Activated naive CD4-positive, alpha-beta T cell treated with anti-CD3 and anti-CD28 coated beads for 36 hours (primary cell): ENCODE measurements at regions of chr18 and their contacts with region 1.

Region 1: GRCh38 chr18:35580701-35581539 is 620 bp upstream of the GALNT1 start:
- DNase-seq: peak; percentile 51
- H3K4me3 Mint-ChIP-seq: peak overlapping the region; percentile 74
- H3K27ac Mint-ChIP-seq: peak overlapping the region; percentile 71
- H3K4me1 Mint-ChIP-seq: peaks cover 45% of the 10 kb centered on the region
- H3K27me3 Mint-ChIP-seq: peaks cover 15% of the 10 kb centered on the region

Region 2: GRCh38 chr18:35290073-35290735 is 290.7 kb before region 1 on chr18 and contains the start of gene ZSCAN30:
- CTCF ChIA-PET with region 1: no interaction called
- intact Hi-C with region 1: loop called (anchors 2 kb)
- DNase-seq: peak; percentile 96
- H3K4me3 Mint-ChIP-seq: peak within 1 kb of the TSS; percentile 96
- H3K27ac Mint-ChIP-seq: peak within 1 kb of the TSS; percentile 97
- H3K4me1 Mint-ChIP-seq: peaks cover 48% of the 10 kb centered on the region
- H3K27me3 Mint-ChIP-seq: peaks cover 2% of the 10 kb centered on the region
- total RNA-seq, gene ZSCAN30: 12.0 to 14.3 TPM

Region 3: DNA sequence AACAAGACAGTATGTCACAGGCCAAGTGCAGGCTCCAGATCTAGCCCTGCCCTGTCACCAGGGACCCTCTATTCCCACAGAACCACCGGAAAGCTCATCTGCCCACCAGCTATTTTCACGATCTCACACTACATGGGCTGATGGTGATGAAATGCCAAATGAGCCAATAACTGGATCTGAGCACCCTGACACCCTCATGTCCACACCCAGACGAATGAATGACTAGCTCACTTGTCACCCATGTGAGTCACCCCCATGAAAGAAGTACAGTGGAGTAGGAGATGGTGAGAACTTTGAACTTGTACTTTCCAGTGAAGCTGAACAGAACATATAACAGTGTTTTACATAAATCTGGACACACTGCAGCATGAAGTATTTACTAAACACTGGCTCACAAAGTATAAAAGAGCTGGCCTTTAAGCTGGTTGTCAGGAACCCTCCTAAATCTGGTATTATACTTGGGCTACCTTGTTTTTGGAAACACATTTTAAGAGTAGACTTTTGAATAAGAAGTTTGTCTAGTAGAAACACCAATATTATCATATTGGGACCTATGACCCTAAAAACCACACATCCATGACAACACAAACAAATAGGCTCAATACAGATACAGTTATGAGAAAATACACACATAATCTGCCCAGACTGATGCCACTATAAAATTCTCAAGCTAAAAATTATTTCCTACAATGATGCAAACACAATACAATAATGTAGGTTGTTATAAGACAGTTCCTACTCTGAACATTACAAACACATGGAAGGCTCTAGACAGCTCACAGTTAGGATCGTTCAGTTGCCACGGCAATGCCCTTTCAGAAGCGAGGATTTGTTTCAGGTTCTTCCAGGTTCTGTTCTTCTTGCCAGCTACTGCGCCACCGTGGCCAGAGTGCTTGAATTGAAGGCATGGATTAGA is 102.1 kb before region 1 on chr18:
- CTCF ChIA-PET with region 1: no interaction called
- intact Hi-C with region 1: loop called (anchors 1 kb)
- DNase-seq: peak; percentile 68
- H3K4me3 Mint-ChIP-seq: peak overlapping the region; percentile 0
- H3K27ac Mint-ChIP-seq: peak overlapping the region; percentile 9
- H3K4me1 Mint-ChIP-seq: peaks cover 43% of the 10 kb centered on the region
- H3K27me3 Mint-ChIP-seq: no peaks in the 10 kb centered on the region

Region 4: GRCh38 chr18:35484034-35484433 is 96.9 kb before region 1 on chr18:
- CTCF ChIA-PET with region 1: no interaction called
- intact Hi-C with region 1: loop called (anchors 1 kb)
- DNase-seq: no peak
- H3K4me3 Mint-ChIP-seq: no peak overlapping the region
- H3K27ac Mint-ChIP-seq: no peak overlapping the region
- H3K4me1 Mint-ChIP-seq: peaks cover 60% of the 10 kb centered on the region
- H3K27me3 Mint-ChIP-seq: no peaks in the 10 kb centered on the region

Region 5: GRCh38 chr18:35513181-35513936 is 67.6 kb before region 1 on chr18:
- CTCF ChIA-PET with region 1: no interaction called
- intact Hi-C with region 1: no loop called
- DNase-seq: no peak
- H3K4me3 Mint-ChIP-seq: no peak overlapping the region
- H3K27ac Mint-ChIP-seq: no peak overlapping the region
- H3K4me1 Mint-ChIP-seq: no peaks in the 10 kb centered on the region
- H3K27me3 Mint-ChIP-seq: no peaks in the 10 kb centered on the region

Region 6: GRCh38 chr18:35547008-35547605 is 33.8 kb before region 1 on chr18:
- CTCF ChIA-PET with region 1: no interaction called
- intact Hi-C with region 1: loop called (anchors 1 kb)
- DNase-seq: no peak
- H3K4me3 Mint-ChIP-seq: no peak overlapping the region
- H3K27ac Mint-ChIP-seq: peak overlapping the region; percentile 9
- H3K4me1 Mint-ChIP-seq: peaks cover 16% of the 10 kb centered on the region
- H3K27me3 Mint-ChIP-seq: no peaks in the 10 kb centered on the region

Region 7: DNA sequence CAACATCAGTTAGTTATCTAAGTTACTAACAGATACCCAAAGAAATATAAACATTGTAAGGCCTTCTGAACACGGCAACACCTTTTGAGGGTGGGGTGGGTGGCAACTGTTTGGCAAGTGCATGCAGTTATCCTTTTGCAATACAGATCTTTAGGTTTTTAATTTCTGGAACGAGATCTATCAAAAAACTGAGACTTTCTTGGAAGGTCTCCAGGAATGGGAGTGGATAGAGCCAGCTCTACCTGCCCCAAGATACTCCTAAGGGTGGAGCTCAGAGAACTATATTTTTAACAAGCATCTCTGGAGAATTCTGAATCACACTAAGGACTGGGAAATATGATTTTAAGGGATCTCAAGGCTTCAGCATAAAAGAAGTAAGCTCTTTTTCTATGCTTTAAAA is 10.7 kb before region 1 on chr18:
- CTCF ChIA-PET with region 1: no interaction called
- intact Hi-C with region 1: no loop called
- DNase-seq: no peak
- H3K4me3 Mint-ChIP-seq: no peak overlapping the region
- H3K27ac Mint-ChIP-seq: no peak overlapping the region
- H3K4me1 Mint-ChIP-seq: peaks cover 7% of the 10 kb centered on the region
- H3K27me3 Mint-ChIP-seq: no peaks in the 10 kb centered on the region

Region 8: DNA sequence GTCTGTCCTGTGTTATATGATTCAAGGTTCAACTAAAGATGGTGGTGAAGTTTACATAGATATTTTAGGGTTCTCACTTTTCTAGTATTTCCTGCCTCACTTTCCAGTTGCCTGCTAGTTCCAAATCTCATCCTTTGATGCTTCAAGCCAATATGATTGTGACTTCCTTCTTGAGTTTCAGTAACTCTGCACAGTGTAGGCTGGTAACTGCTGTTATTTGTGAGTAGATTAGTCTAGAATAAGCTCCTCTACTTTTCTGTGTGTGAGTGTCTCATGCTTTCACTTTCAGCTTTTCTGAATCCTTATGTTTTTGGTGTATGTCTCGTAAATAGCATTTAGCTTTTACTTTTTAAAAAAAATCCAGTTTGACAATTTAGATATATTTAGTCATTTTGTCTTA is 43.2 kb after region 1 on chr18:
- CTCF ChIA-PET with region 1: no interaction called
- intact Hi-C with region 1: loop called (anchors 1 kb)
- DNase-seq: no peak
- H3K4me3 Mint-ChIP-seq: peak overlapping the region; percentile 20
- H3K27ac Mint-ChIP-seq: peak overlapping the region; percentile 48
- H3K4me1 Mint-ChIP-seq: peaks cover 33% of the 10 kb centered on the region
- H3K27me3 Mint-ChIP-seq: no peaks in the 10 kb centered on the region

Region 9: DNA sequence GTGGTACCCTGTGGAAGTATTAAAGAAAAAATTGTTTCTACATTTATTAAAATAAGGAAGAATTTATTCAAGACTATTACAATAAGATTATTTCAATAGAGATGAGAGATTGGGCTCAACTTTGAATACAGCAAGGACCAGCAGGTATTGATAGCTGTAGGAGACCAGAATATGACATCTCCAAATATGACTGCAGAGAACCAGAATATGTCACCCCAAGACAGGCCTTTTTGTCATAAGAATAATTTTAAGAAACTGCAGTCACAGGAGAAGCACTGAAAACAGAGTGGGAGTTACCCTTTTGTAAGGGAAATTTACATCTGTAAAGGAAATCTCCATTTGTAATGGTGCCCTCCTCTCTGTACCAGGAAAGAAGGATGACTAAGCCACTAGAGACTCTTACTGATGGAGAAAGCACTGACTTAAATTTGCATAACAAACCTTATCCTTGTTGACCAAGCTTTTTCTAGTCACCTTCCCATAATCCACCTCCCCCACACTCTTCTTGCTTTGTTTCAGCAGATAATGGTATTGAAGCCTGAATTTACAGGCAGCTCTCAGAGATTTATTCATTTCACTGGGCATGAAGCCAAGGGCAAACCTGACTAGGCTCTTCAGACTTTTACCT is 246.5 kb after region 1 on chr18:
- CTCF ChIA-PET with region 1: no interaction called
- intact Hi-C with region 1: loop called (anchors 5 kb)
- DNase-seq: peak; percentile 62
- H3K4me3 Mint-ChIP-seq: no peak overlapping the region
- H3K27ac Mint-ChIP-seq: peak overlapping the region; percentile 75
- H3K4me1 Mint-ChIP-seq: peaks cover 15% of the 10 kb centered on the region
- H3K27me3 Mint-ChIP-seq: peaks cover 22% of the 10 kb centered on the region